Endothelial cell of umbilical vein (primary cell): ENCODE measurements at regions of chr9 and their contacts with region 1.

Region 1: DNA sequence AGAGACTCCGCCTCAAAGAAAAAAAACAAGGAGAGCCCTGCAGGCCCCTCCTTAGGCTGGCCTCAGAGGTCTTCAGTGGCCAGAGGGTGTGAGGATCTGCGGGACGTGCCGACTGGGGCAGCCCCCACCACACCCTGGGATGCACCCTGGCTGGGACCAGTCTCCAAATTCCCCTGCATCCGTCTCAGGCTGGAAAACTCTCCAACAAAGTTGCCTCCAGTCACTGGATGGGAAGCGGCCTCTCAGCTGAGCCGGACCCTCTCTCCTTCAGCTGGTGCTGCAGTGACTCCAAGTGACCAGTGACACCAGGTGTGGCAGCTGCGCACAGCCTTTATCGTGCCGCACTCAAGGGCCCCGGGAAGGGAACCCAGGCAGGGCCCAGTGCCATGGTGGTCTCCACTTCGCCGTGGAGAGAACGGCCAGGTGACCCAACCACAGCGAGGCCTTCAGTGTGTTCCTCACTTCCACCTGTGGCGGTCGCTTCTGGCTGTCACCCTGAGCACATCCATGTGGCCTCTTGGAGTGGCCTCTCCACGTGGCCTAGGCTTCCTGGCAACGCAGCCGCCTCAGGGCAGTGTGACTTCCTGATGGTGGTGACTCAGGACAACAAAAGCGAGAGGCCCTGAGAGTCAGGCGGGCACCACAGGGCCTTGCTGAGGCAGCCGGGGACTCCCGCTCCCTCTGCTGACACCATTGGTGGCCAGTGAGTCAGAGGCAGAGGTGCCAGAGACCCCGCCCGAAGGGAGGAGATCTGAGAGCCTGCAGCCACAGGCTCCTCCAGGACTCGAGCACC is 19.3 kb upstream of the CAMSAP1 start:
- DNase-seq: peak; percentile 51
- H3K4me3 ChIP-seq: no peak overlapping the region
- H3K27ac ChIP-seq: peak overlapping the region; percentile 15
- H3K4me1 ChIP-seq: peaks cover 7% of the 10 kb centered on the region
- H3K27me3 ChIP-seq: no peaks in the 10 kb centered on the region
- CTCF ChIP-seq: no peak
- POLR2A ChIP-seq: no peak

Region 2: GRCh38 chr9:135939351-135940265 is 13.0 kb after region 1 on chr9:
- CTCF ChIA-PET with region 1: no interaction called
- POLR2A ChIA-PET with region 1: no interaction called
- dilution Hi-C with region 1: no loop called
- intact Hi-C with region 1: loop called (anchors 2 kb)
- DNase-seq: no peak
- H3K4me3 ChIP-seq: no peak overlapping the region
- H3K27ac ChIP-seq: no peak overlapping the region
- H3K4me1 ChIP-seq: peaks cover 2% of the 10 kb centered on the region
- H3K27me3 ChIP-seq: no peaks in the 10 kb centered on the region
- CTCF ChIP-seq: no peak
- POLR2A ChIP-seq: no peak